BJ (cell line): ENCODE measurements at regions of chr2 and their contacts with region 1.

Region 1: GRCh38 chr2:191165176-191165643 is 14.4 kb upstream of the STAT4 start:
- DNase-seq: peak; percentile 20
- H3K4me3 ChIP-seq: no peak overlapping the region
- H3K27me3 ChIP-seq: no peaks in the 10 kb centered on the region
- CTCF ChIP-seq: peak; percentile 69

Region 2: DNA sequence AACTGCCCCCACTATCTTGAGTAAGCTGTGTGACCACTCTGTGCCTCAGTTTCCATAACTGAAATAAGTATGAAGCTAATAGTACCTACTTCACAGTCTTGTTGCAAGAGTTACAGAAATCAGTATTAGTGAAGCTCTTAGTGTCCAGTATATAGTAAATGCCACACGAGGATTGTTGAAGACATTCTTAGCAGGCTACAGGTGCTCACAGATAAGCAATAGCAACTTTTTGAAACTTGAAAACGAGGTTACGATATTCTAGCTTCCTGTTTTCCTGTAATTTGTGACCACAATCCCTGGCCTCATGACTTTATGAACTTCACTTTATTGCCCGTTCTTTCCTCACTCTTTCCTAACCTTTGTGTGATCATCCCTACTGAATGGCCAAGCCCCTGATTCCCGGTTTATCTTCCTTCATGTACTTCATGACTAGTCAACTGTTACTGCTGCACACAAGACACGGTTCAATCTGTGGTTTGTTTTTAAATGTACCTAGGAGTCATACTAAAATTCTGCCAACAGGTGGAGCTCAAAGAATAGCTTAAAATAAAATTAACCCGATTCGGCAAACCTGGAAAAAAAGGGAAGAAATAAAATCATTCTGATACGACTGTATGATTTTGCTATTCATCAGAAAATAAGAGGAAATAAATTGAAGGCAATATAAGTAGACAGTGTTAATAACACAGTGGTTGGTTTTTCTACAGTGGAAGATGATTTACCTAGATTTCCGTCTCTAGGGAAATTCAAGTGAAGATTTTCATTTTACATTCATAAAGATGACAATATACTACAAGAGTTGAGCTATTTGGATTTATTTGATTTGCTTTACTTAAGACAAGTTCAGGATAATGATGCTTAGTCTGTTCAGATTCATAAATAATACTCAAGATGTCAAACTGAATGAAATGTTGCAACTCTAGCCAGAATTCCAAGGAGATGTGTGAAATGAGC is 113.1 kb before region 1 on chr2:
- CTCF ChIA-PET with region 1: interaction called, 45 read pairs
- POLR2A ChIA-PET with region 1: interaction called, 4 read pairs
- DNase-seq: peak; percentile 26
- H3K4me3 ChIP-seq: no peak overlapping the region
- H3K27me3 ChIP-seq: no peaks in the 10 kb centered on the region
- CTCF ChIP-seq: peak; percentile 55

Region 3: DNA sequence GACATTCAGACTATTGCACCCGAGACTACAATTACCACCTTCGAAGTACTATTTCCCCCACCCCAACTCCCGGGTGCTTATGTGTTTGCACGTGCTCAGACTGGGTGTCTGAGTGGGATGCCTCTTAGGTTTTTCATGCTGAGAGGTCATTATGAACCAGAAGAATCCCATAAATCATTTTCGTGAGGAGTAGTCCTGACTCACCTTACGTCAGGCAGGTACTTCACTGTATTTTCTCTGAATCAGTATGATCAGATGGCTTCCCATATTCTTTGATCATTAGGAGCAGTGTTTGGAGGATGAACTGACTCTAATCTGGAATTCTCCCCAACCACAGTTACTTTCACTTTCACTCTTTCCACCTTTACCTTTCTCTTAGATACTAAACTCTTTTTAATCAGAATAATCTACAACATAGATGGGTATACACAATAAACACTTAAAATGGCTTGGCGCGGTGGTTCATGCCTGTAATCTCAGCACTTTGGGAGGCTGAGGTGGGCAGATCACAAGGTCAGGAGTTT is 24.0 kb after region 1 on chr2:
- CTCF ChIA-PET with region 1: no interaction called
- POLR2A ChIA-PET with region 1: no interaction called
- DNase-seq: no peak
- H3K4me3 ChIP-seq: no peak overlapping the region
- H3K27me3 ChIP-seq: no peaks in the 10 kb centered on the region
- CTCF ChIP-seq: no peak

Region 4: DNA sequence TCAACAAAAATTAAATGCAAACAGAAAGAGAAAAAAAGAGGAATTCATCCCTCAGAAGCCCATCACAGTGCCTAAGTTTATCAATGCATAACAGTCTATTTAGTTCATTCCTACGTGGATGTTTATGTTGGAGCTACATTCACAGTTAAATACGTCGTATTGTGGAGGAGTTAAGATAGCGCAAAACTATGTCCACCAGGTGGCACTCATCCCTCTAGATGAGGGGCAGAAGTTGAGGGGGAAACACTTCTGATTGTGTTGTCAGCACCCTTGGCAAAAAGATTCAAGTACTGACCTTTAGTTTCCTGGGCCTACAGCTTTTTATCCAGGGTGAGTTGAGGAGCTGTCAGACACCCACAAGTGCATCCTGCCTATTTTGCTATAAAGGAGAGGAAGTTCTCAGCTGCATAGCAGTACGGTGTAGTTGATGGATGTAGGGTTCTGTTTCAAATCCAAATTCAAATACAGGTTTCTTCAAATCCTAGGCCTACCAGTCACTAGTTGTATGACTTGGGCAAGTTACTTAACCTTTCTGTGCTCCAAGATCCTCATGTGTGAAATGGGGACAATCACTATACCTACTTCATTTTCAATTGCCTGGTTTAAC is 53.2 kb after region 1 on chr2:
- CTCF ChIA-PET with region 1: interaction called, 19 read pairs
- POLR2A ChIA-PET with region 1: no interaction called
- DNase-seq: no peak
- H3K4me3 ChIP-seq: no peak overlapping the region
- H3K27me3 ChIP-seq: no peaks in the 10 kb centered on the region
- CTCF ChIP-seq: peak; percentile 50

Region 5: GRCh38 chr2:191486584-191487320 is 321.5 kb after region 1 on chr2:
- CTCF ChIA-PET with region 1: interaction called, 10 read pairs
- POLR2A ChIA-PET with region 1: no interaction called
- DNase-seq: peak; percentile 98
- H3K4me3 ChIP-seq: no peak overlapping the region
- H3K27me3 ChIP-seq: no peaks in the 10 kb centered on the region
- CTCF ChIP-seq: no peak

Region 6: GRCh38 chr2:191515551-191515950 is 350.3 kb after region 1 on chr2:
- CTCF ChIA-PET with region 1: interaction called, 23 read pairs
- POLR2A ChIA-PET with region 1: no interaction called
- DNase-seq: no peak
- H3K4me3 ChIP-seq: no peak overlapping the region
- H3K27me3 ChIP-seq: no peaks in the 10 kb centered on the region
- CTCF ChIP-seq: no peak

Region 7: GRCh38 chr2:191555092-191555742 is 390.0 kb after region 1 on chr2:
- CTCF ChIA-PET with region 1: no interaction called
- POLR2A ChIA-PET with region 1: interaction called, 10 read pairs
- DNase-seq: no peak
- H3K4me3 ChIP-seq: no peak overlapping the region
- H3K27me3 ChIP-seq: no peaks in the 10 kb centered on the region; the same call in 1 of the 2 replicates
- CTCF ChIP-seq: peak; percentile 71